Right cardiac atrium (tissue), 5 donors: ENCODE measurements at regions of chr15 and their contacts with region 1.

Region 1: DNA sequence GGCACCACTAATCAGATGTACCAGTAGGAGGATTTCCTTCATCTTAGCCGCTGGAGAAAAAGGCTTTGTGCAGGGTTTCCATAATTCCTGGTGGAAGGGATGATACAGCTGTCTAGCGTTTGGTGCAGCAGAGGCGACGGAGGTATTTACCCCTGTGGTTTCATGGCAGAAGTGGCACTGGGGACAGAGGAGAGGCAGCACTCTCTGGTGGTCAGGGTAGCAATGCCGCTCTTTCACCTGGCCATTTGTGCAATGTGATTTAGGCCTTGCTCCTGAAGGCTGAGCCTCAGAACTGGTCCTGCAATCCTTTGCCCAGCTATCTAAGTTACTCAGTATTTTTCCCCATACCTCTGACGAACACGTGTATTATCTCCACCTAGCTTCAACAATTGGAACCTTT is 47.1 kb upstream of the BNIP2 start:
- DNase-seq: no peak
- ATAC-seq: no peak
- H3K4me3 ChIP-seq: no peak overlapping the region
- H3K27ac ChIP-seq: no peak overlapping the region
- H3K4me1 ChIP-seq: no peaks in the 10 kb centered on the region
- H3K27me3 ChIP-seq: no peaks in the 10 kb centered on the region

Region 2: DNA sequence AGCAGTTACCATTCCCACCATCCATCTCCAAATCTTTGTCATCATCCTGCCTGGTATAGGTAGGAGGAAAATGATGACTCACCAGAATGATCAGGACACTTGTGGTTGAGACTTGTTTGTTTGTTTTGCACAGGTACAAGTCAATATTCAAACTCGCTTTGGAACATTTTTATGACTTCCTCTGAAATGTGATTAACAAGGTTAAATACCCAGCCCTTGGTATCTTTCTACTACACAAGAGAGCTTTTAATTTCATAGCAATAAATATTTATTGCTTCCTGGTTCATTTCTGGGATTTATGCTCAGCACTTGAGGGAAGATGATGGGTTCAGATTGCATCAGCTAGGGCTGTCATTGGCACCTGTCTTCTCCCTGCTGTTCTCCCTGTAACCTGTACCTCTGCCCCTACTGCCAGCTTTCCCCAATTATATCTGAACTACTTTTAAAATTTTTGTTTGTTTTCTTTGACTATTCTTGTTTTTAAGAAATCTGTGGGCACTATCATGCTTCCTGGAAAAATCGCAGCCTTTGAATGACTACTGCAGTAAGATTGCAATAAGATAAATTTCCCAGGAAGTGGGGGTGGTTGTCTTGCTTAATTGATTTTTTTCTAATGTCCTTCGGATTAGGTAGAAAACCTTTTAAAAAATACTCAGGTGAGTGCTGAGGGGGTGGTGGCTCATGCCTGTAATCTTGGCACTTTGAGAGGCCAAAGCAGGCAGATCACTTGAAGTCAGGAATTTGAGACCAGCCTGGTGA is 148.9 kb before region 1 on chr15:
- intact Hi-C with region 1: no loop called
- DNase-seq: no peak
- ATAC-seq: no peak
- H3K4me3 ChIP-seq: no peak overlapping the region
- H3K27ac ChIP-seq: no peak overlapping the region
- H3K4me1 ChIP-seq: no peaks in the 10 kb centered on the region
- H3K27me3 ChIP-seq: no peaks in the 10 kb centered on the region

Region 3: DNA sequence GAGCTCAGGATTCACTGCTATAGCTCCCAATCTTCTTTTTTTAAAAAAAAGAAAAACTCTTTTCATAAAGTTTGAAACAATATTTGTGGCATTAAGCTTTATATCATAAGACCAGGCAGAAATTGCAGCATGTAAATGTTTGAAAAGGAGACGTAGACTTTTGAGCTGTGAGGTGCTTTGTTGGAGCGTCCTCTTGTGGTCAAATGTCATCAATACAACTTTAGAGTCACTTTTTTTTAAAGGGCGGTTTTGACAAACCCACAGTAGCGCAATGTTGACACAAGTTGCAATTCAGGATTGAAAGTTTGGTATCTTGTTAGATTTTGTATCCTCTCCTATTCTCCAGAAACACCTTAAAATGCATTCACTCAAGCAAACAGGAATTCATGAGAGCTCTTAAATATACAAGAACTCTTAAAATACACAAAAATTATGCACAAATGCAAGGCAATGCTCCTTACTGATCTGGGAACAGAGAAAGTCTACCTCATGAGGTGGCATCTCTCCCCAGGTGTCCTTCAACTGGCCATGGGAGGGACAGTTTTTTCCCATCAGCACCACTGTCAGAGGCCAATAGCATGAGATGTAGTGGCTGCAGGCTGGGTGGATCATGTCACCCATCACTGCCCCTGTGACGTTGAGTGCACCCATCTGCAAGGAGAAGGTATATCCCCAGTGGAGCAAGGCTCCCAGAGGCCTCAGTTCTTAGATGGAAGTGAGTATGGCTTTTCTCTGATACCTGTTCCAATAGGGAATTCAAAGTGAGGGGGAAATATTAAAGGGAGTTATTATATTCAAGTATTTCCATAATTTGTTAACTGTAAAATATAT is 590.9 kb after region 1 on chr15:
- intact Hi-C with region 1: loop called in 1 of 4 experiments (anchors 10 kb)
- DNase-seq: no peak
- ATAC-seq: no peak
- H3K4me3 ChIP-seq: no peak overlapping the region
- H3K27ac ChIP-seq: no peak overlapping the region
- H3K4me1 ChIP-seq: no peaks in the 10 kb centered on the region
- H3K27me3 ChIP-seq: no peaks in the 10 kb centered on the region